ENCODE measurements at regions of chr1 and their contacts with region 1.

Region 1: GRCh38 chr1:48817505-48818114 is 40.9 kb upstream of the BEND5 start:
- DNase-seq: peak; percentile 47
- H3K4me3 ChIP-seq: no peak overlapping the region
- H3K27ac ChIP-seq: no peak overlapping the region
- H3K4me1 ChIP-seq: no peaks in the 10 kb centered on the region
- H3K27me3 ChIP-seq: no peaks in the 10 kb centered on the region
- CTCF ChIP-seq: peak; percentile 94 to 97

Region 2: GRCh38 chr1:48480504-48480903 is 337.1 kb before region 1 on chr1:
- CTCF ChIA-PET with region 1: no interaction called
- dilution Hi-C with region 1: no loop called
- in situ Hi-C with region 1: no loop called
- intact Hi-C with region 1: no loop called
- DNase-seq: no peak
- H3K4me3 ChIP-seq: no peak overlapping the region
- H3K27ac ChIP-seq: no peak overlapping the region
- H3K4me1 ChIP-seq: no peaks in the 10 kb centered on the region
- H3K27me3 ChIP-seq: no peaks in the 10 kb centered on the region
- CTCF ChIP-seq: no peak

Region 3: DNA sequence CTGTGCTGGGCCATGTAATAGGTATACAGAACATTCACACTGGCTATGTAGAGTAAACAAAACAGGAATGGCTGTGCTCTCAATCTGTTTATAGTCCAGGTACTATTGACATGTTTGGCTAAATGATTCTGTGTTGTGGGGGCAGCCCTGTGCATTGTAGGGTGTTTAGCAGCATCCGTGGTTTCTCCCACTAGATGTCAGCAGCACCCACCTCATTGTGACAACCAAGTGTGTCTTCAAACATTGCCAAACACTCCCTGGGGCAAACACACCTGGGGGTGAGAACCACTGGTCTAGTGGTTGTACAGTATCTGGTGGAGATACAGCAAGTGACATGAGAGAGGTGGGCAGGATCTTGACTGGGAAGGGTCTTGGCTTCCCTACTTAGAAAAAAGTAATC is 265.2 kb before region 1 on chr1:
- CTCF ChIA-PET with region 1: no interaction called
- dilution Hi-C with region 1: no loop called
- in situ Hi-C with region 1: loop called in 1 of 2 experiments (anchors 10 kb)
- intact Hi-C with region 1: loop called (anchors 1 kb)
- DNase-seq: peak; percentile 37
- H3K4me3 ChIP-seq: no peak overlapping the region
- H3K27ac ChIP-seq: no peak overlapping the region
- H3K4me1 ChIP-seq: peaks cover 21% of the 10 kb centered on the region
- H3K27me3 ChIP-seq: no peaks in the 10 kb centered on the region
- CTCF ChIP-seq: peak; percentile 45 to 70

Region 4: DNA sequence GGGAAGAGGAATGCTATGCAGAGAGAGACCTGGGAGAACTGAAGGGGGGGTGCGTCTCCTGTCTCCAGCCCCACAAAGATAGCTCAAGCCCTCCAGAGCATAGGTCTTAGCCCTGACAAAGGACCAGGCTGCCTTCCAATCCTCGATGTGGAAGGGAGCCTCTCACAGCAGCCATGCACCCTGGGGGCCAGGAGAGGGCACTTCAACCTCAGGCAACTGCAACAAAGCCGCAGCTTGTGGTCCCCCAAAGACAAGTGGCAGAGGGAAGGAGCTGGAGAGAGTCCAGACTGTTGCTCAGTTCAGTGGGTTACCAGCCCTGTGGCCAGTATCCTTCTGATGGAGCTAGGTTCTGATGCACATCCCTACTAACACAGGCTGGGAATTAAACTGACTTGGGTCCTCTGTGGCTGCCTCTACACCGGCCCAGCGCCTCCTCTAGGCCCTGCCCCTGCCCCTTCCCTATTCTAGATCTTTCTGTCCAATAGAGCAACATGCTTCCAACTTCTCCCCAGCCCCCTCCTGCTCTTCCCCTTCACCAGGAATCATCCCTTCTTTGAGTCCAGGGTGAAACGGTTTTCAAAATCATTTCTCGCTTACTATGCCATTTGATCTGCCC is 244.9 kb before region 1 on chr1:
- CTCF ChIA-PET with region 1: interaction called, 7 read pairs
- dilution Hi-C with region 1: no loop called
- in situ Hi-C with region 1: loop called in 1 of 2 experiments (anchors 10 kb)
- intact Hi-C with region 1: loop called (anchors 1 kb)
- DNase-seq: peak; percentile 49
- H3K4me3 ChIP-seq: no peak overlapping the region
- H3K27ac ChIP-seq: no peak overlapping the region
- H3K4me1 ChIP-seq: peaks cover 12% of the 10 kb centered on the region
- H3K27me3 ChIP-seq: no peaks in the 10 kb centered on the region
- CTCF ChIP-seq: peak; percentile 85 to 88

Measured in mammary epithelial cell (primary cell).